ENCODE measurements at regions of chr7 and their contacts with region 1.

Region 1: GRCh38 chr7:39949980-39950472 is at the start of gene CDK13:
- DNase-seq: peak; percentile 88
- ATAC-seq: peak; percentile 67
- total RNA-seq, gene CDK13: 18.1 TPM

Region 2: GRCh38 chr7:39754326-39755120 is 195.5 kb before region 1 on chr7:
- intact Hi-C with region 1: no loop called
- DNase-seq: no peak
- ATAC-seq: no peak

Region 3: GRCh38 chr7:39811161-39811614 is 138.8 kb before region 1 on chr7:
- intact Hi-C with region 1: no loop called
- DNase-seq: no peak
- ATAC-seq: no peak

Region 4: DNA sequence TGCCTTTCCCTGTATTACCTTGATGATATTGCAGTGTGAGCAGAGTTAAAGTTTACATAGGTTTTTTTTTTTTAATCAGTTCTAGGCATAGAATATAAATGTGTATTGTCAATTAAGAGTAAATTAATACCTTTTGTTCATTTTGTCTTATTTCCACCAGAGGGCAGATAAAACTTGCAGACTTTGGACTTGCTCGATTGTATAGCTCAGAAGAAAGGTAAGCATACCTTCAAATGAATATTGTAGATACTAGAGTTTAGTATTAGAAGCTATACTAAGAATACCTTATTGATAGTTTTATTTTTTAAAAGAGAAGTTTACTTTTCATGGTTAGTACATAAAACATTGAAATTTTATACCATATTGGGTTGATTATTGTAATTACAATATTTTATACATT is 97.6 kb after region 1 on chr7:
- intact Hi-C with region 1: loop called (anchors 5 kb)
- DNase-seq: no peak
- ATAC-seq: no peak

Region 5: DNA sequence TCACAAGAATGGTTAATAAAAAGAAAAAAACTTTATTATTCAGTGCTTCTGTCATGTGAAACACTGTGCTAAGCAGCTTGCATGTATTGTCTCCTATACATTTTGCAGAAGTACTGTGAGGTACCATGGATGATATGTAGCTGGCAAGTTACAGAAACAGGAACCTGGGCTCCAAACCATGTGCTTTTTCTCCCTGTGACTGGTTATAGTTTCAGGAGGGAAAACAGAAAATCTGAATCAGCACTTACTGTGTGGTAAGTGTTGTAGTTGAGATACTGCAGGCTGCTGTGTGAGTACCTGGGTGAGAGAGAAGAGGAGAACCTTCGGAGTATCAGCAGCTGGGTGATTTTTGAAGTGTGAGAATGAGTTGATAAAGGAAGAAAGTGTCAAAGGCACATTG is 469.8 kb after region 1 on chr7:
- intact Hi-C with region 1: no loop called
- DNase-seq: no peak
- ATAC-seq: no peak

Measured in Right ventricle myocardium superior (tissue), 1 donor.